ENCODE measurements at regions of chr2 and their contacts with region 1.

Region 1: GRCh38 chr2:172710584-172711024 is 25.0 kb upstream of the RAPGEF4 start:
- DNase-seq: peak; percentile 65
- H3K4me3 ChIP-seq: no peak overlapping the region
- H3K27ac ChIP-seq: no peak overlapping the region
- H3K4me1 ChIP-seq: no peaks in the 10 kb centered on the region
- H3K27me3 ChIP-seq: peaks cover 4 to 11% of the 10 kb centered on the region in 2 experiments
- CTCF ChIP-seq: peak; percentile 64 to 67
- POLR2A ChIP-seq: no peak

Region 2: DNA sequence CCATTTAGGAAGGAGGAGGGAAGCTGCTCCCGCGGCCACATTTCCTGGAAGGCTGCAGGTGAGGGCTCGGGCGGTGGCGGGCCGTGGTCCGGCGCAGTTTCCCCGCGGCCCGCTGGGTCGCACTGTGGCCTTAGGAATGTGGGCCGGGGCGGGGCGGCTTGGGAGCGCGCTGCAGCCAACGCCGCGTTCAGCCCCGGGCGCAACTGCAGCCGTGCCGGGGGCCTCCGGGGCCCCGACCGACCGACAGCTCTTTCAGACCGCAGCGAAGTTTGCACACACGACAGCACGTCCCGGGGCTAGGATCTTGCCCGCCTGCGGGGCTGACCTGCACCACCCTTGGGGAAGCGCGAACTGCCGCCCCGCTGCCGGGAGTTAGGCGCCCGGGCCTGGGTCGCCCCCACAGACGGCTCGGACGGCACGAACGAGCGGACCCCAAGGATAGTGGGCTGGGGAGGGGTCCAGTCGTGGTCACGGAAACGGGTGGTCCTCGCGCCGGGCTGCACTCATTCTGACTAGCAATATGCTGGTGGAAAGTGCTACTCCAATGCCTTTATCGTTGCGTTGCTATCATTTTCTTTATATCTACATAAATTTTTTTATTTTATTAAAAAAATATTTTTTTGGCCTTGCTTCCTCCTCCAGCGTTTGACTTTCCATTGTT is 538.0 kb before region 1 on chr2:
- CTCF ChIA-PET with region 1: interaction called, 4 read pairs
- POLR2A ChIA-PET with region 1: no interaction called
- dilution Hi-C with region 1: no loop called
- intact Hi-C with region 1: loop called (anchors 5 kb)
- DNase-seq: peak; percentile 52
- H3K4me3 ChIP-seq: peak overlapping the region; percentile 12 to 50 (median 50)
- H3K27ac ChIP-seq: no peak overlapping the region
- H3K4me1 ChIP-seq: peaks cover 4% of the 10 kb centered on the region
- H3K27me3 ChIP-seq: no peaks in the 10 kb centered on the region
- CTCF ChIP-seq: peak; percentile 83 to 90
- POLR2A ChIP-seq: no peak

Region 3: GRCh38 chr2:172588931-172589330 is 121.7 kb before region 1 on chr2:
- CTCF ChIA-PET with region 1: interaction called, 108 read pairs
- POLR2A ChIA-PET with region 1: no interaction called
- dilution Hi-C with region 1: no loop called
- intact Hi-C with region 1: loop called (anchors 1 kb)
- DNase-seq: no peak
- H3K4me3 ChIP-seq: no peak overlapping the region
- H3K27ac ChIP-seq: no peak overlapping the region
- H3K4me1 ChIP-seq: no peaks in the 10 kb centered on the region
- H3K27me3 ChIP-seq: no peaks in the 10 kb centered on the region
- CTCF ChIP-seq: no peak
- POLR2A ChIP-seq: no peak

Region 4: GRCh38 chr2:172655091-172655837 is 55.3 kb before region 1 on chr2:
- CTCF ChIA-PET with region 1: interaction called, 10 read pairs
- POLR2A ChIA-PET with region 1: no interaction called
- dilution Hi-C with region 1: no loop called
- intact Hi-C with region 1: no loop called
- DNase-seq: peak; percentile 11
- H3K4me3 ChIP-seq: no peak overlapping the region
- H3K27ac ChIP-seq: no peak overlapping the region
- H3K4me1 ChIP-seq: no peaks in the 10 kb centered on the region
- H3K27me3 ChIP-seq: no peaks in the 10 kb centered on the region
- CTCF ChIP-seq: no peak
- POLR2A ChIP-seq: no peak

Region 5: GRCh38 chr2:172693037-172693436 is 17.6 kb before region 1 on chr2:
- CTCF ChIA-PET with region 1: interaction called, 18 read pairs
- POLR2A ChIA-PET with region 1: no interaction called
- dilution Hi-C with region 1: no loop called
- intact Hi-C with region 1: no loop called
- DNase-seq: peak; percentile 98
- H3K4me3 ChIP-seq: no peak overlapping the region
- H3K27ac ChIP-seq: no peak overlapping the region
- H3K4me1 ChIP-seq: peaks cover 17% of the 10 kb centered on the region
- H3K27me3 ChIP-seq: no peaks in the 10 kb centered on the region
- CTCF ChIP-seq: no peak
- POLR2A ChIP-seq: no peak

Region 6: DNA sequence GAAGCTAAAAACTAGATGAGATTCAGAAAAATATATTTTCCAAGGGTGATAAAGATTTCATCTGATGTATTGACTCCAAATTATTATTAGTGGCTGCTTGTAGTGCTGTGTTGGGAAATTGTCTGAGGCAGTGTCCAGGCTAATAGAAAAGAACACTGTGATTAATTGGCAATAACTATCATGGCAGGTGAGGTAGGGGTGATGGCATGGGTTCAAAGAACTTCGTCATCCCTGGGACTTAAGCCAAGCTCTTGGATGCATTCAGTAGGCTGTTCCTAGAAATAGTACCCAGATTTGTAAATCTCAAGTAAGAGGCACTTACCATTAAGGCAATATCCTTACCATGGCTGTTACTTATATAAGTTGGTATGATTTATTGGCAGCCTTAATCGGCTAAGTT is 11.9 kb after region 1 on chr2:
- CTCF ChIA-PET with region 1: interaction called, 16 read pairs
- POLR2A ChIA-PET with region 1: no interaction called
- dilution Hi-C with region 1: no loop called
- intact Hi-C with region 1: no loop called
- DNase-seq: no peak
- H3K4me3 ChIP-seq: no peak overlapping the region
- H3K27ac ChIP-seq: no peak overlapping the region
- H3K4me1 ChIP-seq: no peaks in the 10 kb centered on the region
- H3K27me3 ChIP-seq: peaks cover 0 to 2% of the 10 kb centered on the region in 2 experiments
- CTCF ChIP-seq: no peak
- POLR2A ChIP-seq: no peak

Region 7: GRCh38 chr2:173414823-173415322 is 704.3 kb after region 1 on chr2:
- CTCF ChIA-PET with region 1: no interaction called
- POLR2A ChIA-PET with region 1: no interaction called
- dilution Hi-C with region 1: no loop called
- intact Hi-C with region 1: no loop called
- DNase-seq: peak; percentile 50
- H3K4me3 ChIP-seq: no peak overlapping the region
- H3K27ac ChIP-seq: no peak overlapping the region
- H3K4me1 ChIP-seq: no peaks in the 10 kb centered on the region
- H3K27me3 ChIP-seq: peaks cover 0 to 7% of the 10 kb centered on the region in 2 experiments
- CTCF ChIP-seq: no peak
- POLR2A ChIP-seq: no peak

Measured in endothelial cell of umbilical vein (primary cell).